Activated naive CD4-positive, alpha-beta T cell treated with anti-CD3 and anti-CD28 coated beads for 36 hours (primary cell): ENCODE measurements at regions of chr5 and their contacts with region 1.

Region 1: GRCh38 chr5:170791325-170791954 is 7.9 kb downstream of the GABRP start:
- DNase-seq: peak; percentile 53
- H3K4me3 Mint-ChIP-seq: no peak overlapping the region
- H3K27ac Mint-ChIP-seq: no peak overlapping the region
- H3K4me1 Mint-ChIP-seq: no peaks in the 10 kb centered on the region
- H3K27me3 Mint-ChIP-seq: no peaks in the 10 kb centered on the region

Region 2: GRCh38 chr5:170638454-170639220 is 152.8 kb before region 1 on chr5:
- CTCF ChIA-PET with region 1: interaction called, 18 read pairs
- intact Hi-C with region 1: loop called (anchors 1 kb)
- DNase-seq: peak; percentile 83
- H3K4me3 Mint-ChIP-seq: no peak overlapping the region
- H3K27ac Mint-ChIP-seq: no peak overlapping the region
- H3K4me1 Mint-ChIP-seq: peaks cover 9% of the 10 kb centered on the region
- H3K27me3 Mint-ChIP-seq: peaks cover 3% of the 10 kb centered on the region

Region 3: GRCh38 chr5:171226105-171226754 is 434.8 kb after region 1 on chr5:
- CTCF ChIA-PET with region 1: no interaction called
- intact Hi-C with region 1: no loop called
- DNase-seq: no peak
- H3K4me3 Mint-ChIP-seq: no peak overlapping the region
- H3K27ac Mint-ChIP-seq: no peak overlapping the region
- H3K4me1 Mint-ChIP-seq: no peaks in the 10 kb centered on the region
- H3K27me3 Mint-ChIP-seq: peaks cover 9% of the 10 kb centered on the region